CD4-positive, alpha-beta T cell (primary cell): ENCODE measurements at regions of chr3 and their contacts with region 1.

Region 1: GRCh38 chr3:177359593-177360357 is 162.5 kb upstream of the TBL1XR1 start:
- DNase-seq: peak; percentile 92 to 98 (median 96)
- ATAC-seq: peak; percentile 86
- H3K4me3 ChIP-seq: peak overlapping the region; percentile 60
- H3K4me3 Mint-ChIP-seq: peak overlapping the region; percentile 98
- H3K27ac ChIP-seq: peak overlapping the region; percentile 94 to 98
- H3K27ac Mint-ChIP-seq: peak overlapping the region; percentile 100
- H3K4me1 ChIP-seq: peaks cover 44% of the 10 kb centered on the region
- H3K4me1 Mint-ChIP-seq: peaks cover 57% of the 10 kb centered on the region
- H3K27me3 ChIP-seq: no peaks in the 10 kb centered on the region
- H3K27me3 Mint-ChIP-seq: peaks cover 13% of the 10 kb centered on the region
- CTCF ChIP-seq: no peak

Region 2: GRCh38 chr3:177050501-177051237 is 309.1 kb before region 1 on chr3:
- CTCF ChIA-PET with region 1: interaction called, 25 read pairs
- POLR2A ChIA-PET with region 1: interaction called, 82 read pairs
- intact Hi-C with region 1: loop called (anchors 1 to 2 kb)
- DNase-seq: peak in 3 of 14 experiments; percentile 70 to 76 (median 75)
- ATAC-seq: peak; percentile 93
- H3K4me3 ChIP-seq: no peak overlapping the region
- H3K4me3 Mint-ChIP-seq: no peak overlapping the region
- H3K27ac ChIP-seq: no peak overlapping the region
- H3K27ac Mint-ChIP-seq: peak overlapping the region; percentile 70
- H3K4me1 ChIP-seq: no peaks in the 10 kb centered on the region
- H3K4me1 Mint-ChIP-seq: peaks cover 22% of the 10 kb centered on the region
- H3K27me3 ChIP-seq: no peaks in the 10 kb centered on the region
- H3K27me3 Mint-ChIP-seq: no peaks in the 10 kb centered on the region
- CTCF ChIP-seq: peak; percentile 75

Region 3: GRCh38 chr3:177126015-177126773 is 233.6 kb before region 1 on chr3:
- CTCF ChIA-PET with region 1: no interaction called
- POLR2A ChIA-PET with region 1: interaction called, 5 read pairs
- intact Hi-C with region 1: loop called in 1 of 2 experiments (anchors 10 kb)
- DNase-seq: no peak
- ATAC-seq: no peak
- H3K4me3 ChIP-seq: no peak overlapping the region
- H3K4me3 Mint-ChIP-seq: no peak overlapping the region
- H3K27ac ChIP-seq: no peak overlapping the region
- H3K27ac Mint-ChIP-seq: no peak overlapping the region
- H3K4me1 ChIP-seq: no peaks in the 10 kb centered on the region
- H3K4me1 Mint-ChIP-seq: peaks cover 90% of the 10 kb centered on the region
- H3K27me3 ChIP-seq: no peaks in the 10 kb centered on the region
- H3K27me3 Mint-ChIP-seq: no peaks in the 10 kb centered on the region
- CTCF ChIP-seq: no peak

Region 4: GRCh38 chr3:177284383-177284881 is 75.3 kb before region 1 on chr3:
- CTCF ChIA-PET with region 1: no interaction called
- POLR2A ChIA-PET with region 1: no interaction called
- intact Hi-C with region 1: loop called in 1 of 2 experiments (anchors 10 kb)
- DNase-seq: peak in 6 of 14 experiments; percentile 2 to 55 (median 34)
- ATAC-seq: peak; percentile 43
- H3K4me3 ChIP-seq: no peak overlapping the region
- H3K4me3 Mint-ChIP-seq: no peak overlapping the region
- H3K27ac ChIP-seq: no peak overlapping the region
- H3K27ac Mint-ChIP-seq: peak overlapping the region; percentile 19
- H3K4me1 ChIP-seq: peaks cover 21% of the 10 kb centered on the region
- H3K4me1 Mint-ChIP-seq: peaks cover 32% of the 10 kb centered on the region
- H3K27me3 ChIP-seq: no peaks in the 10 kb centered on the region
- H3K27me3 Mint-ChIP-seq: no peaks in the 10 kb centered on the region
- CTCF ChIP-seq: no peak

Region 5: DNA sequence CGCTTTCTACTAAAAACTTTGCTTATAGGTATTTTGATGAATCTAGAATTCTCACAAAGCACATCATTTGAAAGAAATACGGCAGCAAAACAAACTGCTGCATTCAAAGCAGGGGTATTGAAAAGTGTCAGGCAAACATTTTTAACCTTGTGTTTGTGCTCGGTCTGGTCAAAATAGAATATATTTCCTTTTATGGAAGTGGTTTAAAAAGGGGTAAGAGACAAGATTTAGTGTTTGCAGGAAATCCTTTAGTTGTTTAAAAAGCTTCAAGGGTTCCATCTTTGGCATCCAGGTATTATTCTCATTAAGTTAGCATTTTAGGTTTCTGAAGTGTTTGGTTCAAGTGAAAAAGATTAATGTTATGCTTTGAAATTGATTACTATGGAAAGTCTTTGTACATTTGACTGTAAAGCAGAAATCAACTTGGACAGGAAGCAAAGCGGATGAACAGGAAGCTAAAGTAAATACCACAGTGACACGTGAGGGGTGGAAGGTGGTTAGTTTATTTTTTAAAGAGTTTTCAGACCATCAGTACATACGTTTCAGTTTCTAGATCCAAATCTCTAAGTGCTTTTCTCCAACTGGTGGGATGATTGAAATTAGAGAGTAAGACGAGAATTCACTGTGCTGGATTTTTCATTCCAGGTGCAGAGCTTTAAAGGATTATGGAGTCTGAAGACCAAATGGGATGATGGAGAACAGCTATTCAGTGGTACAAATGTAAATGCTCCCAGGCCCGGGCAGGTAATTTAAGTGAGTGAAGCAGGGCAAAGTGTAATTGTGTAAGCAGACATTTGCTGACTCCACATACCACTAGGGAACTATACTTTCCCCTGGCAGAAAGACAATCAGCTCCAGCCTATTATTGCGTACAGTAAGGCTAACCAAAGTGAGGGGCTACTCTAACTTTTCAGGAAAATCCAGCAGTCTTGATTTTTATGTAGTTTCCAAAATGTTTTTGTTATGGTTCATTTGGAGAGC is 179.3 kb after region 1 on chr3:
- CTCF ChIA-PET with region 1: no interaction called
- POLR2A ChIA-PET with region 1: interaction called, 19 read pairs
- intact Hi-C with region 1: no loop called
- DNase-seq: peak in 4 of 14 experiments; percentile 20 to 79 (median 55)
- ATAC-seq: peak; percentile 59
- H3K4me3 ChIP-seq: peak overlapping the region; percentile 19
- H3K4me3 Mint-ChIP-seq: peak overlapping the region; percentile 74
- H3K27ac ChIP-seq: peak overlapping the region; percentile 19 to 31
- H3K27ac Mint-ChIP-seq: peak overlapping the region; percentile 83
- H3K4me1 ChIP-seq: peaks cover 27% of the 10 kb centered on the region
- H3K4me1 Mint-ChIP-seq: peaks cover 65% of the 10 kb centered on the region
- H3K27me3 ChIP-seq: no peaks in the 10 kb centered on the region
- H3K27me3 Mint-ChIP-seq: no peaks in the 10 kb centered on the region
- CTCF ChIP-seq: no peak

Region 6: GRCh38 chr3:177665122-177665808 is 305.5 kb after region 1 on chr3:
- CTCF ChIA-PET with region 1: no interaction called
- POLR2A ChIA-PET with region 1: interaction called, 3 read pairs
- intact Hi-C with region 1: loop called in 1 of 2 experiments (anchors 5 kb)
- DNase-seq: no peak
- ATAC-seq: no peak
- H3K4me3 ChIP-seq: no peak overlapping the region
- H3K4me3 Mint-ChIP-seq: no peak overlapping the region
- H3K27ac ChIP-seq: no peak overlapping the region
- H3K27ac Mint-ChIP-seq: no peak overlapping the region
- H3K4me1 ChIP-seq: no peaks in the 10 kb centered on the region
- H3K4me1 Mint-ChIP-seq: no peaks in the 10 kb centered on the region
- H3K27me3 ChIP-seq: no peaks in the 10 kb centered on the region
- H3K27me3 Mint-ChIP-seq: no peaks in the 10 kb centered on the region
- CTCF ChIP-seq: no peak